ENCODE measurements at regions of chr2 and their contacts with region 1.

Region 1: GRCh38 chr2:219521066-219521880 is 7.0 kb downstream of the ASIC4 start:
- DNase-seq: no peak
- H3K4me3 ChIP-seq: no peak overlapping the region; the same call in none of the 2 replicates
- CTCF ChIP-seq: peak; percentile 94

Region 2: DNA sequence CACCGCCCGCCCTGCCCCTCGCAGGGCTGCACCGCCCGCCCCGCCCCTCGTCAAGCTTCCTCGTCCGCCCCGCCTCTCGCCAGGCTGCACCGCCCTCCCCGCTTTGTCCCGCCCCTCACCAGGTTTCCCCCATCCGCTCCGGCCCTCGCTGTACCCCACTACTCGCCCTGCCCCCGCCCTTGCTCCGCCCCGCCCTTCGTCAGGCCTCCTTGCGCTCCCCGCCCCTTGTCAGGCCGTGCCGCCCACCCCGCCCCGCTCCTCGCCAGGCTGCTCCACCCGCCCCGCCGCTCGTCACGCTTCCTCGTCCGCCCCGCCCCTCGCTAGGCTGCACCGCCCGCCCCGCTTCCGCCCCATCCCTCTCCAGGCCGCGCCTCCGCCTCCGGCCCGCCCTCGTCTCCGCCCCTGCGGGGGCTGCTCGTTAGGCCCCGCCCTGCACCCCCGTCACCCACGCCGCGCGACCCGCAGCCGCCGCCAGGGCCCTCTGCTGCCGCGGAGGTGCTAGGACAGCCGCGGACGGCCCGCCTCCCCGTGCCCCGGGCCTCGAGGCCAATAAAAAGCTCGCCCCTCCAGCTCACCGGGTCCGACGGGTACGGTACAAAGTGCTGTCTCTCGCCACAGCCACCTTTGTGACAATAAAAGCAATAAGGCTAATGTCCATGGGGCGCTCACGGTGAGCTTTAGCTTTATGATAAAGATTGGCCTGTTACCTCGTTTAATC is 133.0 kb before region 1 on chr2:
- CTCF ChIA-PET with region 1: interaction called, 106 read pairs
- POLR2A ChIA-PET with region 1: no interaction called
- DNase-seq: peak; percentile 73
- H3K4me3 ChIP-seq: peak overlapping the region; percentile 56
- CTCF ChIP-seq: peak; percentile 60

Region 3: GRCh38 chr2:219430633-219431615 is 90.3 kb before region 1 on chr2:
- CTCF ChIA-PET with region 1: interaction called, 15 read pairs
- POLR2A ChIA-PET with region 1: no interaction called
- DNase-seq: no peak
- H3K4me3 ChIP-seq: no peak overlapping the region
- CTCF ChIP-seq: peak; percentile 48

Measured in AG04449 (cell line).